Endothelial cell of umbilical vein (primary cell): ENCODE measurements at regions of chr14 and their contacts with region 1.

Region 1: GRCh38 chr14:31207755-31208545 is at the start of gene HECTD1:
- DNase-seq: peak; percentile 89
- H3K4me3 ChIP-seq: peak within 1 kb of the TSS; percentile 51 to 96 (median 78)
- H3K27ac ChIP-seq: peak within 1 kb of the TSS; percentile 66
- H3K4me1 ChIP-seq: peaks cover 14% of the 10 kb centered on the region
- H3K27me3 ChIP-seq: no peaks in the 10 kb centered on the region
- CTCF ChIP-seq: peak; percentile 60 to 82
- POLR2A ChIP-seq: peak; percentile 68
- total RNA-seq, gene HECTD1: 173 and 181 TPM in 2 replicates

Region 2: DNA sequence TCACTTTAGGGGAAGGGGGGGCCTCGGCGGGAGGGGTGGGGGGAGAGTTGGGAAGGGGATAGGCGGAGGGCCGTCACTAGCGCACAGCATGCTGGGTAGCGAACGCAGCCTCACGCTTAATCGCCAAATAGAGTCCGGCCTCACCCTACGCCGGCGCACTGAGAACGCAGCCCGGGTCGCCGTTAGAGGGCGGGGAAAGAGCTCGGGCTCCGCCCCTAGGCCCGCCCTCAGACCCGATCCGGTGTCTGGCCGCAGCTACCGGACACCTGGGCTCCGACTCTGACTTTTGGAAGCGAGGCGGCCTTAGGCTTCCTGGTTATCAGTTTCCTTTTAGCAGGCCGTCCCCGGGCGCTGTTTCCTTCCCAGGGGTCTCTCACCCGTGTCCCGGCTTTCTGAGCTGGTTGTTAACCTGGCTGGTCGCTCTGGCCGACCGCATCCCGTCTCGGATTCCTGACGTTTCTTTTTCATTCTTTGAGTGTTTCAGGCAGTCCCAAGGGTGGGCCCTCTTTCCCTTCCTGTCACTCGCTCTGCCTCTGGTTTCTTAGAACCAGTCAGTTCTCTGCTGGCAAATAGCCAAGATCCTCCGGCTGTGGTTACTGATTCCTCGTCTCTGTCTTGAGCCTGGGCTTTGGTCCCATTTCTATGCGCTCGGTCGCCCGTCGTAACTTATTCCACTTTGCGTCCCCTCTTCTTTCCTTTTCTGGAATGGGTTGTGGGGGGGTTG is 181.4 kb before region 1 on chr14:
- CTCF ChIA-PET with region 1: interaction called, 7 read pairs
- POLR2A ChIA-PET with region 1: interaction called, 5 read pairs
- dilution Hi-C with region 1: no loop called
- intact Hi-C with region 1: loop called (anchors 5 kb)
- DNase-seq: peak; percentile 97
- H3K4me3 ChIP-seq: peak overlapping the region; percentile 89 to 99 (median 96)
- H3K27ac ChIP-seq: peak overlapping the region; percentile 95
- H3K4me1 ChIP-seq: peaks cover 22% of the 10 kb centered on the region
- H3K27me3 ChIP-seq: no peaks in the 10 kb centered on the region
- CTCF ChIP-seq: no peak
- POLR2A ChIP-seq: peak; percentile 93

Region 3: DNA sequence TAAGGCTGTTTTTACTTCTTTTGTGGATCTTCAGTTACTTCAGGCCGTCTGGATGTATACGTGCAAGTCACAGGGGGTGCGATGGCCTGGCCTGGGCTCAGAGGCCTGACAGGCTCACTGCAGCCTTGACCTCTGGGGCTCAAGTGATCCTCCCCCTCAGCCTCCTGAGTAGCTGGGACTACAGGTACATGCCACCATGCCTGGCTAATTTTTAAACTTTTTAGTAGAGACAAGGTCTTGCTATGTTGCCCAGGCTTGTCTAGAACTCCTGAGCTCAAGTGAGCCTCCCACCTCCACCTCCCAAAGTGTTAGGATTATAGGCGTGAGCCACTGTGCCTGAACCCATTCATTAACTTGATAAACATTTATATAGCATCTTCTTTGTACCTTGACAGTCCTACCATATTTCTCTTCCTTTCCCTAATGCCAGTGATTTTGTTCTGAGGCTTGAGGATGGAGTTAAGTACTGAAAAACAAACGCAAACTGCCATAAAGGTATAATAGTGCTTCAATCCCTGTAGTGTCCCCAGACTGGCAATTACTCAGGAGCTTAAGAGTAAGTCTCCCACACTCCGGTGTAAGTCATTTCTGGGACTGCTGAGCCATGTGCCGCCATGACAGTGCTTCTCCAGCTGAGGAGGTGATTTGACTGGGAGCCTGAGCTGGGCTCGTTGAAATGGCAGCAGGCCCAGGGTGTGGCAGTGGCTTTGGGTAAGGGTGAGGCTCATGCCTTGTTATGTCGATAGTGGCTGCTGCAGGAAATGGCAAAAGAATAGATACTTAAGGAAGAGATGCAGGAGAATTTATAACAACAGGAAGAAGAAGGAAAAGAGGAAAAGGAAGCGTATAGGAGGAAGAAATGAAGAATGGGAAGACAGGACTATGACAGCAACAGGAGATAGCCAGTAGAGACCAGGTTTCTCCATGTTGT is 43.3 kb after region 1 on chr14:
- CTCF ChIA-PET with region 1: no interaction called
- POLR2A ChIA-PET with region 1: no interaction called
- dilution Hi-C with region 1: no loop called
- intact Hi-C with region 1: no loop called
- DNase-seq: no peak
- H3K4me3 ChIP-seq: no peak overlapping the region
- H3K27ac ChIP-seq: no peak overlapping the region
- H3K4me1 ChIP-seq: no peaks in the 10 kb centered on the region
- H3K27me3 ChIP-seq: no peaks in the 10 kb centered on the region
- CTCF ChIP-seq: no peak
- POLR2A ChIP-seq: no peak

Region 4: DNA sequence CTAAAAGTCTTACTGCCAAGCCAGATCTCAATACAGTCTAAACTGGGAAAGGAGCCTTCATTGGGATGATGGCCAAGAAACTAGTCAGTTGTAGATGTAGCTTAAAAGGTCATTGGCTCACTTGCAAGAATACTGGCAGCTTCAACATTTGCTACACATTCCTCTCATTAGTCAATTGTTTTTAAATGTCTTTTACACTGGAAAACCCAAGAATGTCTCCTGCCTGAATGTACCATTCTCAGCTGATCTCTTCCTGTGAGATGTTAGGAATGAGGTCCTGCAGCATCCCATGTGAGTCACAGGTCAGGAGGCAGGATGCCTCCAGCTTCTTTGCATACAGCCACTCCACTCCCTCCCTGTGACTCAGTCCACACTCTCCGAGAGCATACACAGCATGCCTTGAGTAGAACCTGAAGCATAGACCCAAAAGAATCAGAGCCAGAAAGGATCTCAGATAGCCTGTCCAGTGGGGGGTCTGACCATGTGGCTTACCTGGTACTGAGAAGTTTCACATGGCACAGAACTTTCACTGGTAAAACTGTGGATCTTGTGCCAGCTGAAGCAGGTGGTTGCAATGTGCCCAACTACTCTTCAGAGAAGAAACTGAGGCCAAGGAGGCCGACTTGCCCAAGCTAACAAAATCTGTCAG is 55.7 kb after region 1 on chr14:
- CTCF ChIA-PET with region 1: interaction called, 25 read pairs
- POLR2A ChIA-PET with region 1: no interaction called
- dilution Hi-C with region 1: no loop called
- intact Hi-C with region 1: loop called (anchors 1 kb)
- DNase-seq: peak; percentile 95
- H3K4me3 ChIP-seq: no peak overlapping the region
- H3K27ac ChIP-seq: peak overlapping the region; percentile 81
- H3K4me1 ChIP-seq: peaks cover 18% of the 10 kb centered on the region
- H3K27me3 ChIP-seq: no peaks in the 10 kb centered on the region
- CTCF ChIP-seq: no peak
- POLR2A ChIP-seq: no peak

Region 5: DNA sequence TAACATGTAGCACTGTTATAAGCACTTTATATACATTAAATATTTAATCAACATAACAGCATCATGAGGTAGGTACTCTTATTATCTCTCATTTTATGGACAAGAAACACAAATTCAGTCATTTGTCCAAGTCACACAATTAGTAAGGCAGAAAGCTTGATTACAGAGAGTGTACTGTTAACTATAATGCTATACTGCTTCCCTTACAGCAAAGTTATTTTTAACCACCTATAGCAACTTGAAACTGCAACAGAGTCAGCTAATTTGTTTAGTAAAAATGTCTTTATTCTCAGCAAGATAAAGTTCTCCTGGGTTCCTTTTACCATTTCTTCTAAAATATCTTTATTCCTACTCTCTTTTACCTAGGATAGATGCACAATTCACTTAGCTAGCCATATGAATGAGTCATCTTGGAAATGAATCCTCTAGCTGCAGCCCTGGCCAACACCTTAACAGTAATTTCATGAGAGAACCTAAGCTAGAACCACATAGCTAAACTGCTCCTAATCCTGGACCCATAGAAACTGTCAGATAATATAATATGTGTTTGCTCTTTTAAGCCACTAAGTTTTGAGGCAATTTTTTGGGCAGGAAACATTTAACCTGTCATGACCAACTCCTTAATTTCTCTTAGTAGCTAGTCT is 89.9 kb after region 1 on chr14:
- CTCF ChIA-PET with region 1: interaction called, 17 read pairs
- POLR2A ChIA-PET with region 1: interaction called, 3 read pairs
- dilution Hi-C with region 1: no loop called
- intact Hi-C with region 1: loop called (anchors 1 kb)
- DNase-seq: no peak
- H3K4me3 ChIP-seq: no peak overlapping the region
- H3K27ac ChIP-seq: no peak overlapping the region
- H3K4me1 ChIP-seq: peaks cover 35% of the 10 kb centered on the region
- H3K27me3 ChIP-seq: no peaks in the 10 kb centered on the region
- CTCF ChIP-seq: no peak
- POLR2A ChIP-seq: no peak

Region 6: GRCh38 chr14:31360919-31361662 is 153.1 kb after region 1 on chr14:
- CTCF ChIA-PET with region 1: interaction called, 7 read pairs
- POLR2A ChIA-PET with region 1: no interaction called
- dilution Hi-C with region 1: no loop called
- intact Hi-C with region 1: loop called (anchors 1 kb)
- DNase-seq: peak; percentile 22
- H3K4me3 ChIP-seq: no peak overlapping the region
- H3K27ac ChIP-seq: peak overlapping the region; percentile 68
- H3K4me1 ChIP-seq: peaks cover 28% of the 10 kb centered on the region
- H3K27me3 ChIP-seq: no peaks in the 10 kb centered on the region
- CTCF ChIP-seq: no peak
- POLR2A ChIP-seq: no peak

Region 7: DNA sequence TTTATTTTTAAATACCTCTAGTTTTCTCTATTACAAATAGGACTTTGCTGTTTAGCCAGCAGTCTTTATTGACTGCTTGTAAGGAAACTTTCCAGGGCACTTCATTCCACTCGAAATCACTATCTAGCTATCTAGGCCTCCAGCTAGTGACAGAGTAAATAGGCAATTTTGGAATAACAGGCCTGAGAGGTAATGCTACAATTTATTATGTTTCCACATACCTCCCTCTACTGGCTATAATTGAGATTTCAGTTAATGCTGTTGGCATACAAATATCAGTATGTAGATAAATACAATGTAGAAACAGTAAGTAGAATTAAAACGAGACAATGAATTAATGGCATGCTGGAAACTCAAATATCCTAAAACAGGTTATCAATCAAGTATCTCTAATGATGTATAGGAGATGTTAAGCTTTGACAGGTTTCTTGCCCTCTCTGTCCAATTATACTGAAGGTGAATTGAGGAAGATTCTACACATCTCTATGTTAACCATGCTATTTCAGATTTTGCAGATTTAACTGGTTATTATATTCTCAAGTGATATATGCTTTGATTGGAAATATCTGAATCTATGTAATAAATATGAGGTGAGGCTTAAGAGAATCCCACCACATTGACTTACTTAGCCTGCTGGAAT is 242.1 kb after region 1 on chr14:
- CTCF ChIA-PET with region 1: interaction called, 4 read pairs
- POLR2A ChIA-PET with region 1: no interaction called
- dilution Hi-C with region 1: no loop called
- intact Hi-C with region 1: loop called (anchors 2 kb)
- DNase-seq: peak; percentile 66
- H3K4me3 ChIP-seq: no peak overlapping the region
- H3K27ac ChIP-seq: no peak overlapping the region
- H3K4me1 ChIP-seq: peaks cover 10% of the 10 kb centered on the region
- H3K27me3 ChIP-seq: no peaks in the 10 kb centered on the region
- CTCF ChIP-seq: peak; percentile 21 to 42
- POLR2A ChIP-seq: no peak